Naive thymus-derived CD4-positive, alpha-beta T cell (primary cell): ENCODE measurements at regions of chr3 and their contacts with region 1.

Region 1: GRCh38 chr3:52238761-52239701 is at the start of gene TWF2:
- DNase-seq: peak; percentile 87 to 96 (median 91)
- ATAC-seq: peak; percentile 91
- H3K4me3 ChIP-seq: peak within 1 kb of the TSS; percentile 92
- H3K4me3 Mint-ChIP-seq: peak within 1 kb of the TSS; percentile 86 to 100 (median 96)
- H3K27ac ChIP-seq: peak within 1 kb of the TSS; percentile 95
- H3K27ac Mint-ChIP-seq: peak within 1 kb of the TSS; percentile 83 to 99 (median 97)
- H3K4me1 ChIP-seq: peaks cover 59 to 62% of the 10 kb centered on the region in 2 donors
- H3K4me1 Mint-ChIP-seq: peaks cover 59 to 88% (median 76%) of the 10 kb centered on the region in 7 donors
- H3K27me3 ChIP-seq: no peaks in the 10 kb centered on the region
- H3K27me3 Mint-ChIP-seq: no peaks in the 10 kb centered on the region
- total RNA-seq, gene TWF2: 38.7 to 110 (median 63.7) TPM

Region 2: GRCh38 chr3:51591231-51591630 is 647.8 kb before region 1 on chr3:
- CTCF ChIA-PET with region 1: no interaction called
- POLR2A ChIA-PET with region 1: no interaction called
- intact Hi-C with region 1: no loop called
- DNase-seq: no peak
- ATAC-seq: no peak
- H3K4me3 ChIP-seq: no peak overlapping the region
- H3K4me3 Mint-ChIP-seq: no peak overlapping the region
- H3K27ac ChIP-seq: no peak overlapping the region
- H3K27ac Mint-ChIP-seq: peak overlapping the region in 2 of 9 donors; percentile 5 to 28
- H3K4me1 ChIP-seq: no peaks in the 10 kb centered on the region
- H3K4me1 Mint-ChIP-seq: peaks cover 7 to 35% (median 20%) of the 10 kb centered on the region in 7 donors
- H3K27me3 ChIP-seq: no peaks in the 10 kb centered on the region
- H3K27me3 Mint-ChIP-seq: no peaks in the 10 kb centered on the region

Region 3: DNA sequence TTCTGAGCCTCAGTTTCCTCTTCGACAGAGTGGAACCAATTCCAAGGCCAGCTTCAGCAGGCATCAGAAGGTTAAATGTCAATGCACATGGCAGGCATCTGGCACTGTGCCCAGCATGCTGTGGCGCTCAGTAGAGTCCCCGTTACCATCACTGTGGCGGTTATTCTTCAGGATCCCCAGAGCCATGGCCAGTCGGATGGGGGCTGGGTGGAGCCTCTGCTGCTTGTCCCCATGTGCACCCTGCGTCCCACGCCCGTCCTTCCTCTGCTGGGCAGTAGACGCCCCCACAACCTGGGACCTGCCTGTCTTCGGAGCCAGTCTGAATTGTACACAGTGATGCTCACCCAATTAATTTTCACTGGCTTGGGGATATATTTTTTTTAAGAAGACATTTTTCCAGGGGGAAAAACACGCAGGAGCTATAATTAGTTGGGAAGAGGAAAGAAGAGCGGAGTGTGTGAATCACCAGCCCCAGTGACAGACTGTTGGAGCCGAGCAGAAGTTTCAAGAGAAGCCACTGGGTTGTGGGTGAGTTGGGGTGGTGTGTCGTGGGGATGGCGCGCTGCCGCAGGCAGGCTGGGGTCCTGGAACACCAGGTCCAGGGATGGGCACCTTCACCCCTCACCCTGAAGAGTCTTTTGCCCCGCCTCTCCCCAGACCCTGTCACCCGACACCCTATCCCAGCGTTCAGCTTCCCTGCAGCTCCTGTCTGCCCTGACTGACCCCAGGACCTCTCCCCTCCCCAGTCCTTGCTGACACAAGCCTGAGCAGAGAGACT is 216.5 kb before region 1 on chr3:
- CTCF ChIA-PET with region 1: no interaction called
- POLR2A ChIA-PET with region 1: no interaction called
- intact Hi-C with region 1: no loop called
- DNase-seq: no peak
- ATAC-seq: peak; percentile 14
- H3K4me3 ChIP-seq: no peak overlapping the region
- H3K4me3 Mint-ChIP-seq: no peak overlapping the region
- H3K27ac ChIP-seq: no peak overlapping the region
- H3K27ac Mint-ChIP-seq: no peak overlapping the region
- H3K4me1 ChIP-seq: no peaks in the 10 kb centered on the region
- H3K4me1 Mint-ChIP-seq: peaks cover 0 to 6% (median 0%) of the 10 kb centered on the region in 7 donors
- H3K27me3 ChIP-seq: no peaks in the 10 kb centered on the region
- H3K27me3 Mint-ChIP-seq: peaks cover 0 to 5% (median 0%) of the 10 kb centered on the region in 5 donors

Region 4: DNA sequence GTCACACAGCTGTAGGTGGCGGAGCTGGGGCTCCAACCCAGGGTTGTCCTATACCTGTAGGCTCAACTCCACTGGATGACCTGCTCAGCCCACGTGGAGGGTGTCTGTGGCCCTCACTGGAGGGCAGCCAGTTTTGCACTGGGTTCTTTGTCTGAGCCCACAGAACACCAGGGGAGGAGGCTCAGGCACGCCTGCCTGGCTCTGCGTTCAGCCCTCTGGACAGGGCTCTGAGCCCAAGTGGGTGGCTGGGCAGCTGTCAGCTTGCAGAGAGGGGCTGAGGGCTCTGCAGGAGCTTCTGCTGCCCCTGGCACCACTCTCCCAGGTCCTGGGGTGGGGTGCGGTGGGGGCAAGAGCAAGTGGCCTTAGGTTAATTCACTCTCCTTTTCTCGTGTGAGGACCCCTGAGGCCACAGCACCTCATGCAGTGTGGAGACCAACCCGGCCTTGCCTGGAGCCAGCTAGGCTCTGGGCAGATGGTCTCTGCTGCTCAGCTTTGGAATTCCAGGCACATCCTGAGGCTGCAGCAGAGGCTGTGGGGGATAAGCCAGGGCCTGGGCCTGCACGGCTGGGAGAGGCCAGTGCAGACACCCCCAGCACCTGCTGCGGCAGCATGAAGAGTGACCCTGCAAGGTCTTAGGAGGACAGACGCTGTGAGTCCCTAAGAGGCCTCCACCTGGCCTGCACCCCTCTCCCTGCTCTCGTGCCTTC is 206.2 kb before region 1 on chr3:
- CTCF ChIA-PET with region 1: no interaction called
- POLR2A ChIA-PET with region 1: no interaction called
- intact Hi-C with region 1: no loop called
- DNase-seq: no peak
- ATAC-seq: no peak
- H3K4me3 ChIP-seq: no peak overlapping the region
- H3K4me3 Mint-ChIP-seq: no peak overlapping the region
- H3K27ac ChIP-seq: no peak overlapping the region
- H3K27ac Mint-ChIP-seq: no peak overlapping the region
- H3K4me1 ChIP-seq: no peaks in the 10 kb centered on the region
- H3K4me1 Mint-ChIP-seq: peaks cover 0 to 5% (median 0%) of the 10 kb centered on the region in 7 donors
- H3K27me3 ChIP-seq: no peaks in the 10 kb centered on the region
- H3K27me3 Mint-ChIP-seq: no peaks in the 10 kb centered on the region

Region 5: DNA sequence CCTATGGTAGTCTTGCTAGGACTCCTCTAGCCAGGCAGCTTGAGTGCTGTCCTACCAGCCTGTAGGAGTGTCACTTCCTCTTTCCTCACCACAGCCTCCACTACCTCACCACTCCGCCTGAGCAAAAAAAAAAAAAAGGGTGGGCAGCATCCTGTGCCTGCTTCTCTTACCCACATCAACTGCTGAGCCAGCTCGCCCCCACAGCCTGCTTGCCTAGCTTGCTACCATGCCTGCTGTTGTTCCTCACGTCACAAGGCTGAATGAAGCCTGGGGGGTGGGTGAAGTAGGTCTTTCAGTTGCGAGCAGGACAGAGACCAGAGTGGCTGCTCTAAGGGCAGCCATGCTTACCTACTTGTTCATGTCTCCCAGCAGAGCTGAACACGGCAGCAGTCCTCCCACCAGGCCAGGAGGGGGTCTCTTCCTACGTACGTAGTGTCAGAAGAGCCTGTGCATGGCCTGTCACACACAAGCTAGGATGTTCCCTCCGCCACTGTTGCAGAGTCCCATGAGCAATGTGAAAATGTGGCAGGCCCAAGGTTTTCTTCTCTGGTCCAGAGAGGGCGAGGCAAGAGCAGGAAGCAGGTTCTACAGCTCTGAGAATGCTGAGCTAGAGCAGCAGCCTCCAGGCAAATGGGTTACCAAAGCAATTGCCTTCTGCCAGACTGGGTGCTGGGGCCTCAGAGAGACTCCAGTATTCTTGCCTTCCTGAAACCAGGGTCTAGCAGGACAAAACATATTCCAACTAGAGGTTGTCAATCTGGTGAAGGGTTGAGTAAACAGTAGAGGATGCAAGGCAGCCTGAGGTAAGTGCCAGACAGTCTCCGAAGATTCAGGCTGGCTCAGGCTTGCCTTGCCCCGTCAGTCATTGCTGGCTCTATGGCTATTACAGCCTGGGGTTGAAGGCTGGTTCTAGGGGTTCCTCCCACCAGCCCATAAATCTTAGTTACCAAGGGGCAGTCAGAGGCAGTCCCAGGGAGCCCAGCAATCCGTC is 14.6 kb after region 1 on chr3:
- CTCF ChIA-PET with region 1: interaction called, 15 read pairs
- POLR2A ChIA-PET with region 1: interaction called, 167 read pairs
- intact Hi-C with region 1: loop called (anchors 1 kb)
- DNase-seq: peak in 8 of 9 donors; percentile 81 to 95 (median 94)
- ATAC-seq: peak; percentile 95
- H3K4me3 ChIP-seq: peak overlapping the region; percentile 38
- H3K4me3 Mint-ChIP-seq: peak overlapping the region; percentile 82 to 97 (median 86)
- H3K27ac ChIP-seq: peak overlapping the region; percentile 87
- H3K27ac Mint-ChIP-seq: peak overlapping the region; percentile 92 to 100 (median 98)
- H3K4me1 ChIP-seq: peaks cover 55 to 91% of the 10 kb centered on the region in 2 donors
- H3K4me1 Mint-ChIP-seq: peaks cover 46 to 99% (median 92%) of the 10 kb centered on the region in 7 donors
- H3K27me3 ChIP-seq: no peaks in the 10 kb centered on the region
- H3K27me3 Mint-ChIP-seq: peaks cover 0 to 4% (median 0%) of the 10 kb centered on the region in 5 donors

Region 6: DNA sequence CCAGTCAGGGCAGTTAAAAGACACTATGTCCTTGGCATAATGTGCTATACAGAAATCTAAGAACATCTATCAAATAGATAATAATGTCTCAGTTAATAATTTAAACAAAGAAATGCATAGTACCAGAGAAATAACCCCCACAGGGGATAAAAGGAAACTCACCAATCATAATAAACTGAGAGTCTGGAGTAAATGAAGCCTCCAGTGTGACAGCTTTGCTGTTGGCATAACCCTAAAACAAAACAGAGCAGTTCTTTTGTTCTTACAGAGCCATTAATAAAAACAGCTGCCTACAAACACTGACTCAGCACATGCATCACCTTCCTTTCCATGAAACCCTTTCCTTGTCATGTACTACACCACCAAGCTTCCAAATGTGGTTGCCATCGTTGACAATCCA is 20.0 kb after region 1 on chr3:
- CTCF ChIA-PET with region 1: interaction called, 15 read pairs
- POLR2A ChIA-PET with region 1: interaction called, 167 read pairs
- intact Hi-C with region 1: no loop called
- DNase-seq: no peak
- ATAC-seq: no peak
- H3K4me3 ChIP-seq: no peak overlapping the region
- H3K4me3 Mint-ChIP-seq: peak overlapping the region in 5 of 10 donors; percentile 23 to 84 (median 27)
- H3K27ac ChIP-seq: peak overlapping the region; percentile 87
- H3K27ac Mint-ChIP-seq: peak overlapping the region; percentile 75 to 99 (median 92)
- H3K4me1 ChIP-seq: peaks cover 47 to 90% of the 10 kb centered on the region in 2 donors
- H3K4me1 Mint-ChIP-seq: peaks cover 61 to 100% (median 93%) of the 10 kb centered on the region in 7 donors
- H3K27me3 ChIP-seq: no peaks in the 10 kb centered on the region
- H3K27me3 Mint-ChIP-seq: no peaks in the 10 kb centered on the region

Region 7: GRCh38 chr3:52270252-52270754 is 31.3 kb after region 1 on chr3:
- CTCF ChIA-PET with region 1: interaction called, 126 read pairs
- POLR2A ChIA-PET with region 1: interaction called, 1,418 read pairs
- intact Hi-C with region 1: loop called (anchors 1 to 2 kb)
- DNase-seq: no peak
- ATAC-seq: peak; percentile 28
- H3K4me3 ChIP-seq: peak overlapping the region; percentile 57
- H3K4me3 Mint-ChIP-seq: peak overlapping the region; percentile 68 to 99 (median 90)
- H3K27ac ChIP-seq: peak overlapping the region; percentile 96
- H3K27ac Mint-ChIP-seq: peak overlapping the region; percentile 79 to 99 (median 96)
- H3K4me1 ChIP-seq: peaks cover 42 to 67% of the 10 kb centered on the region in 2 donors
- H3K4me1 Mint-ChIP-seq: peaks cover 55 to 92% (median 87%) of the 10 kb centered on the region in 7 donors
- H3K27me3 ChIP-seq: no peaks in the 10 kb centered on the region
- H3K27me3 Mint-ChIP-seq: no peaks in the 10 kb centered on the region

Region 8: DNA sequence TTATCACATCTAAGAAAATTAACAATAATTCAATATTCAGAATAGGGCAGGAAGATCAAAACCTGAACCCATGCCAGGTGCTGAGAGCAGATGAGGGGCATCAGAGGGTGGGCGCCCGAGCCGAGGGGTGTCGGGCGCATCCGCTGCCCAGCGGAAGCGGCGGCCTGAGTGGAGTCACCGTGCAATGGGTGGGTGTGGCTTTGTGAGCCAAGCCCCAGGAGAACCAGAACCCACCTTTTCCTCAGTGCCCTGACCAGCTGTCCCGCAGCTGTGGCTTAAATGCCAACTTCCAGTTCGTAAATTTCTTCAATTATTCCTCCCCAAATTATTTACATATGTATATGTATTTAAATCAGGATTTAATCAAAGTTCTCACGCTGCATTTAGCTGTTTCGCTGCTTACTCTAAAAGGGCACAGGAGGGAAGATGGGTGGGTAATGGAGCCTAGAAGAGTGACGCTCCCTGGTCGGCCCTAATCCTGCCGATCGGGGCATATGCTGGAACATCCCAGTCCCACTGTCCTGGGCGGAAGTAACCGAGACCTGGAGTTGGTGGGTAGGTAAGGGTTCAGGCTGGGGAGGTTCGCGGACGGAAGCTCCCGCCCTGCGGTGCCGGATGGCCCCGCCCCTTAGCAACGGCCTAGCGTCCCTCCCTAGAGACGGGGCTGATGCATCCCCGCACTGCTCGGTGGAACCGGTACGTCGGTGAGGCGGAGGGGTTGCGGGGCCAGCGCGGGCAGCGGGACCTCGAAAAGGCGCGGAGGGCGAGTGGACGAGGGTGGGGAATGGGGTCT is 78.4 kb after region 1 on chr3:
- CTCF ChIA-PET with region 1: no interaction called
- POLR2A ChIA-PET with region 1: interaction called, 3 read pairs
- intact Hi-C with region 1: loop called in 1 of 2 experiments (anchors 2 kb)
- DNase-seq: peak; percentile 61 to 78 (median 74)
- ATAC-seq: peak; percentile 92
- H3K4me3 ChIP-seq: peak overlapping the region; percentile 46
- H3K4me3 Mint-ChIP-seq: peak overlapping the region; percentile 68 to 84 (median 76)
- H3K27ac ChIP-seq: peak overlapping the region; percentile 17
- H3K27ac Mint-ChIP-seq: peak overlapping the region in 8 of 9 donors; percentile 38 to 80 (median 66)
- H3K4me1 ChIP-seq: peaks cover 9 to 11% of the 10 kb centered on the region in 2 donors
- H3K4me1 Mint-ChIP-seq: peaks cover 0 to 22% (median 17%) of the 10 kb centered on the region in 7 donors
- H3K27me3 ChIP-seq: no peaks in the 10 kb centered on the region
- H3K27me3 Mint-ChIP-seq: no peaks in the 10 kb centered on the region